ENCODE measurements at regions of chr1 and their contacts with region 1.

Region 1: DNA sequence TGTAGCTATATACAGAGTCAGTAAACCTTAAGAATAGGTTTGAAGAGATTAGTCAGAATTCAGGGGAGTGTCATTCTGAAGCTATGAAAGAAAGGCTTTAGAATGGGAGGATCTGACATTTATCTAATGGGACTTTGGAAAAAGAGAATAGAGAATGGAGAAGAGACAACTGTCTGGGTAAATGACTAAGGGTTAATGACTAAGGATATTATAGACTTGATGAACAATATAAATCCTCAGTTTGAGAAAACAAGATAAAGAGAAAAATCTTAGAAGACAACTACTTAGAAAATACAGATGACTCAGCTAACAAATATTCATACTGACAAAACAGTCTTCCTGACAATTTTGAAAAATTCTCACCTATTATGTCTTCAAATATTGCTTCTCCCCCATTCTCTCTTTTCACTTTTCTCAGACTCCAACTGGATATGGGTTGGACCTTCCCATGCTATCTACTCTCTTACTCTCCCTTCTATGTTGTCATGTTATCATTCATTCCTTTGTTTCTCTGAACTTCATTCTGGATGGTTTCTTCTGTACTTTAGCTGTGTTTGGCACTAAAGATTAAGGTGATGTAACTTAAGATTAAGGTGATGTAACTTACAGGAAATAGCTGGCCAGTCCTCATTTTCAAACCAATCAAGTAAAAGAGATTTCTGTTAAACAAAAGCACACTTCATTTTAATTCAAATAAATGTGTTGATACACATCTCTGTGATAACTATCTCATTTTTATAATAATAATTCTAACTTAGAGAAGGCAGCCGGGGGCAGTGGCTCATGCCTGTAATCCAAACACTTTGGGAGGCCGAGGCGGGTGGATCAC is 20.3 kb downstream of the SLC16A1 start:
- DNase-seq: no peak
- ATAC-seq: peak; percentile 60
- H3K4me3 Mint-ChIP-seq: peak overlapping the region; percentile 66
- H3K27ac Mint-ChIP-seq: peak overlapping the region; percentile 89
- H3K4me1 Mint-ChIP-seq: peaks cover 16% of the 10 kb centered on the region
- H3K27me3 Mint-ChIP-seq: no peaks in the 10 kb centered on the region

Region 2: DNA sequence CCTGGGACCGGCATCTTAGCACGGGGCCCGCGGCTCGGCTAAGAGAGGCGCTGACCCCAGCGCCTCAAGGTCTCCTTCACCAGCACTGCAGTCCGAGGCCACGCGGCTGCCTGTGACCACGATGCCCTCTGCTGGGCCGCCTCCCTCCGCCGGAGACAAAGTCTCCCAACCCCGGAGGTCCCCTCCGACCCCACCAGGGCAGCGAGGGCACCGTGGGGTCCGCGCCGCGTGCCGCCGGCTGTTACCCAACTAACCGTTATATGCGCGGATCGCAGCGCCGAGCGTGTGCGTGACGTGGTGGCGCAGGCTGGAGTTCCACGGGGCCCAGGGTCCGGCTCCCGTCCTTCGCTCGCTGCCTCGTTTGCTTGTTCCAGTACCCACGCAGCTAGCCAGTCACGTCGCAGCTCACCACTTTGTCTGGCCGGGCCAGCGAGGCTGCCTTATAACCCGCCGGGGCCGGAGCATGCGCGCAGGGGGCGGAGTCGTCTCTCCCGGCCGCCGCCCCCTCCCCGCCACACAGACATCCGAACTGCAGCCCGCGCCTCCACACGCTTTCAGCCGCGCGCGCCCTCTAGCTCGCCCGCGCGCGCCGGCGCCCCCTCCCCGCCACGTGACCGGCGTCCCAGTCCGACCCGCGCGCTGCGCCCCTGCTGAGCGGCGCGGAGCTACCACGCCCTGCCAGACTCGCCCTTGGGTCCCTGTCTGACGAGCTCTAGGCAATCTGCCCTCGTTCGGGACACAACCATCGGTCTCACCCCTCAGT is 20.3 kb after region 1 on chr1 and contains the start of gene SLC16A1:
- POLR2A ChIA-PET with region 1: interaction called, 17 read pairs
- DNase-seq: peak; percentile 93
- ATAC-seq: peak; percentile 77
- H3K4me3 Mint-ChIP-seq: peak within 1 kb of the TSS; percentile 86
- H3K27ac Mint-ChIP-seq: peak within 1 kb of the TSS; percentile 99
- H3K4me1 Mint-ChIP-seq: peaks cover 42% of the 10 kb centered on the region
- H3K27me3 Mint-ChIP-seq: no peaks in the 10 kb centered on the region
- total RNA-seq, gene SLC16A1: 31.4 to 35.4 TPM